GM10248 (cell line): ENCODE measurements at regions of chr1 and their contacts with region 1.

Region 1: DNA sequence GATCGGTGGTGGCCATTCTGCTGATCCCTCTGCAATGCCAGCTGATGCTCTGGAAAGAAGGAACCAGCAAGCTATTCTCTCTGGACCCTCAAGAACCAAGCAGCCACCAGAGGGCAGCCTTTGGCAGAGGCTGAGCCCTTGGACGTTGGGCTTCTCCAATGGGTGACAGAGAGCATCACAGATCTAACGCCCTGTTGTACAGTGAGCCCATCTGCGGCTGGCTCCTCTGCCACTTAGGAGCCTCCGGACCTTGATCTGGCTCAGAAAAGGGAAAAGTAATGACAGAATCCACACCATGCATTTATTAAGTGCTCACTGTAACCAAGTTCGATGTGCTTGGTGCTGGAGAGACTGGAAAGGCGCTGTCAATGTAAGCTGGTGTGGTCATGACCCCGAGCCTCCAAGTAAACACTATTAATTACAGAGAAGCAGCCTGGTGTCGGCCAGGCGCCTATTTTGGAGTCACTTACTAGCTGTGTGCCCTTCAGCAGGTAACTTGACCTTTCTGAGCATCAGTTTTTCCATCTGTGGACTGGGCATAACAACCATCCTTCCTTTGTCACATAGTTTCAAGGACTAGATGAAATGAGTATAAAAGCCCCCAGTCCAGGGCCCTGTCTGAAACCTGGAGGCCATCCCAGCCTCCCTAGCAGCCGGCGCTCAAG is 34.9 kb downstream of the ECE1 start:
- DNase-seq: peak; percentile 81
- CTCF ChIP-seq: peak; percentile 92

Region 2: GRCh38 chr1:21232044-21232443 is 23.4 kb before region 1 on chr1:
- CTCF ChIA-PET with region 1: interaction called, 33 read pairs
- POLR2A ChIA-PET with region 1: no interaction called
- DNase-seq: peak; percentile 62
- CTCF ChIP-seq: peak; percentile 60

Region 3: GRCh38 chr1:21238141-21238800 is 17.1 kb before region 1 on chr1:
- CTCF ChIA-PET with region 1: interaction called, 33 read pairs
- POLR2A ChIA-PET with region 1: no interaction called
- DNase-seq: no peak
- CTCF ChIP-seq: no peak

Region 4: GRCh38 chr1:21244986-21245687 is 10.3 kb before region 1 on chr1:
- CTCF ChIA-PET with region 1: interaction called, 26 read pairs
- POLR2A ChIA-PET with region 1: no interaction called
- DNase-seq: no peak
- CTCF ChIP-seq: peak; percentile 3

Region 5: DNA sequence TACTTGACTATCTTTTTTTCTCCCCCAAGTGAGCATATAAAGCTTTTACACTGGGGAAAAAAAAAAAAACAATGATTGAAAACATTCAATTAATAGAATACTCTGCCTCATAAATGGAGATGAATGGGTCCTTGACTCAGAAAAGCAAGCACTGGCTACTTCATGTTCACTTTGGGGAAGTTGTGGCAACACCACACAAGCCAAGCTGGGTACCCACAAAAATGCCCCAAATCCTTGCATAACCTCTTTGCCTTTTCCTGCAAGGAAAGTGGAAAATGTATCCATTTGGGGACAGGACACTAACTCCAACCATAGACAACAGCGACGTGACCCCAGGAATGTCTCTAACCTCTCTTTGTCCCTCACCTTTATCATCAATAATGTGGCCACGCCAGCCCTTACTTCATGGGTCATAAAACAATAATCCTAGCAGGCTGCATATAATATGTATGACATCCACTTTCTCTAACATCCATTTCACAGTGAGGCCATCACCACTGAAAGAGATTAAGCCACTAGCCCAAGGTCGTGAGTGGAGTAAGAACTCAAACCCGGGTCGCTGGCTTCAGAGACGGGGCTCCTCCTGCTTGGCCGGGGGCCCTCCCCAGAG is 32.6 kb after region 1 on chr1:
- CTCF ChIA-PET with region 1: interaction called, 12 read pairs
- POLR2A ChIA-PET with region 1: no interaction called
- DNase-seq: no peak
- CTCF ChIP-seq: no peak

Region 6: DNA sequence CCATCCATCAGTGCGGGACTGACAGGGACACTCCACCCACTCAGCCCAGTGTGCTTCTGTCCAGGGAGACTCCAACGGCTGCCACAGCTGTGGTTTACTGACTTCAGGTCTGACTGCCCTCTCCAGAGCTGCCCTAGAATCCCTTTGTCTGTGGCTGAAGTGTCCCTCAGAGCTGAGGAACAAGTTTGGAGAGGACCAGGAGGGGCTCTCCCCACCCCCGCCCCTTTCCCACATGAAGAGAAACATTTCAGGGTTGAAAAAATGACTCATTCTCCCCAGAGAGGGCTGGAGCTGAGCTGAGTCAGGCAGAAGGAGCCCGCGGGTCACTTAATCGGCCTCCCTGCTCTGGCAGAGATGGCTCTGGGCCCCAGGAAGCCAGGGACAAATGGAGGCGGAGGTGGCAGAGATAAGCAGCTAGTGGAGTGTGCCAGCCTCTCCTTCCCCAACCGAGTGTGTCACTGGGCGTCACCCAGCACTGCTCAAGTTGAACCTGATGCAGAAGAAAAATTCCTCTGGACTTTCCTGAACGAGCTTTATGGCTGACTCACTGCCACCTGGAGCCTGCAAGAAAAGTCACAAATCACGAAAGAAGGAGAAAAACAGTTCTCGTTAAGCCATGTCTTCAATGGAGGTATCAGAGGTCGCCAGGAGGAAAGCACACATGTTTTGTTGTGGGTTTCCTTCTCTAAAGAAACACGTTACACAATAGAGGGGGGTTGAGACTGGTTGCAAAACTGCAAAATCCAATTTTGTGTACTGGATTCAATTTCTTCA is 69.1 kb after region 1 on chr1:
- CTCF ChIA-PET with region 1: interaction called, 11 read pairs
- POLR2A ChIA-PET with region 1: no interaction called
- DNase-seq: peak; percentile 76
- CTCF ChIP-seq: no peak

Region 7: DNA sequence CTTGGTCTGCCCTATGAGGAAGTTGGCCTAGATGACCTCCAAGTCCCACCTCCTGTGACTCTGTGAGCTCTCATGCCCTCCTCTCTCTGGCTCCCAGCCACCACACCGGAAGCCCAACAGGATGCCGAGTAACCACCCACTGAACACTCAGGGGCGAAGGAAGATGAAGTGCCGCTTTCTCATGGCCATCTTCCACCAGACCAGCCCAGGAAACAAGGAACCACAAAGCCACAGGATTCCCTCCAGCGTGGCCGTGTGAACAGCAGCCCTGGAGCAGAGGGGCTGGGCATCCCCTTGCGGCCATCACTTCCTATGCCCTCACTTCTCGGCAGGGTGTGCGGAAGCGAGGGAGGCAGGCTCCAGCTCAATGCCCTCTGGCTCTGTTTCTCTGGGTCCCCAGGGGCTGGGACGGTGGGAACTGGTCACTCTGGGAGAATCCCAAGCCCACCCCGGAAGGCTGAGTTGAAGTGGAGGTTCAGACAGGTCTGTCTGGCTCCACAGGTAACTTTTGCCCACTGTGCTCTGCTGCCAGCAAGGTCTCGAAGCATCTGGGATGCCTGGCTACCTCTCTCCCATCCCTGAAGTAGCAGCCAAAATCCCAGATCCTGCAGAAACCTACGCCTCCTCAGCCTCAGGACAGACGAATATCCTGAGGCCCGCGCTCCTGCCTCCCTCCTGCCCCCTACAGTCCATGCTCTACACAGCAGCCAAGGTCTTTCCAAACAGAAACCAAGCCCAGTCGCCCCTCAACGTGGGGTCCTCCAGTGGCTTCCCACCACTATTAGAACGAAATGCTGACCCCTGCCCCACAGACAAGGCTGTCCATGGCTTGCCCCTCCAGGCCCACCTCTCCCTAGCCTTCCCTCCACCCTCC is 79.0 kb after region 1 on chr1:
- CTCF ChIA-PET with region 1: interaction called, 39 read pairs
- POLR2A ChIA-PET with region 1: no interaction called
- DNase-seq: peak; percentile 78
- CTCF ChIP-seq: peak; percentile 79